ENCODE measurements at regions of chr2 and their contacts with region 1.

Region 1: DNA sequence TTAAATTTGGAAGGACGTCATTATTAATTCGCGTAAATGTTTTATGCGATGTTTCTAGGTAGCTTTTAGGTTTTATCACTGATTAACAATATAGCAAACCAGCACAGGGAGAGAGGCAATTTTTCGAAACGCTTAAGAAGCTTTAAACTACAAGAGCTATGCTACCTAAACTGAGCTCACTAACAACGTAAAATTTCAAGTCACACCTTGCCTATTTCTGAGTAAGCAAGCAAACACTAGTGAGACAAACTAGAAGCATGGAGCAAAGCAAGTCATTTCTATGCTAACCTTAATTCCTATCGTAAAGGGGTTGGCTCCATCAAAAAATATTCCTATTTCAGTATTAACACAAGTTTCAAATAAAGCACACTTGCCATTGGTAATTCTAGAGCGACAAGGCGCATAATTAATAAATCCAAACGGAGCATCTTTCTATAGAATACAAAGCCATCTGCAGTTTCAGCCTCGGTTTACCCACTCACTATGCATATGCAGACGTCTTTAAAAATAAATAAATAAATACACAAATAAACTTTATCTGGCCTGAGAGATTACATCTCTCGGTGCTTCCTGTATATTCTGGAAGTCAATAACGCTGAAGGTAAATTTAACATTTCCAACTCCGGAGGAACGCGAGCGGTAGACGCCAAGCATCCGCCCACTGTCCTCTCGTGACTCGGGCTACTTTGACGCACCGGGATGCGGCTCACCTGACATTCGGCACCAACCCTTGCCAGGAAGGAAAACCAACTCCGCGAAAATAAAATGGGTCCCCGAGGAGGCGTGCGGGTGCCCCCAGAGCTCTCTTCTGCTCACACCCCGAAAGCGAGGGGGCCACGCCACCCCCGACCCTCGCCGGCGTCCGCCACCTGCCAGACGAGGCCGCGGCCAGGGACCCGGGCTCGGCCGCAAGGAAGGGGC is 947 bp downstream of the ITSN2 start:
- DNase-seq: peak; percentile 35 to 79
- ATAC-seq: peak in 1 of 3 donors; percentile 3
- H3K4me3 ChIP-seq: peak overlapping the region; percentile 64
- H3K4me3 Mint-ChIP-seq: peak overlapping the region; percentile 89
- H3K27ac ChIP-seq: peak overlapping the region; percentile 97
- H3K27ac Mint-ChIP-seq: peak overlapping the region; percentile 87 to 93
- H3K4me1 ChIP-seq: peaks cover 15% of the 10 kb centered on the region
- H3K4me1 Mint-ChIP-seq: peaks cover 34 to 38% of the 10 kb centered on the region in 2 donors
- H3K27me3 ChIP-seq: no peaks in the 10 kb centered on the region
- H3K27me3 Mint-ChIP-seq: no peaks in the 10 kb centered on the region
- CTCF ChIP-seq: no peak

Region 2: GRCh38 chr2:24349097-24349496 is 10.3 kb before region 1 on chr2:
- intact Hi-C with region 1: loop called (anchors 1 kb)
- DNase-seq: no peak
- ATAC-seq: no peak
- H3K4me3 ChIP-seq: no peak overlapping the region
- H3K4me3 Mint-ChIP-seq: peak overlapping the region; percentile 5
- H3K27ac ChIP-seq: no peak overlapping the region
- H3K27ac Mint-ChIP-seq: peak overlapping the region; percentile 5 to 25
- H3K4me1 ChIP-seq: peaks cover 19% of the 10 kb centered on the region
- H3K4me1 Mint-ChIP-seq: peaks cover 53 to 64% of the 10 kb centered on the region in 2 donors
- H3K27me3 ChIP-seq: no peaks in the 10 kb centered on the region
- H3K27me3 Mint-ChIP-seq: no peaks in the 10 kb centered on the region
- CTCF ChIP-seq: no peak

Measured in natural killer cell (primary cell).